ENCODE measurements at regions of chr17 and their contacts with region 1.

Region 1: DNA sequence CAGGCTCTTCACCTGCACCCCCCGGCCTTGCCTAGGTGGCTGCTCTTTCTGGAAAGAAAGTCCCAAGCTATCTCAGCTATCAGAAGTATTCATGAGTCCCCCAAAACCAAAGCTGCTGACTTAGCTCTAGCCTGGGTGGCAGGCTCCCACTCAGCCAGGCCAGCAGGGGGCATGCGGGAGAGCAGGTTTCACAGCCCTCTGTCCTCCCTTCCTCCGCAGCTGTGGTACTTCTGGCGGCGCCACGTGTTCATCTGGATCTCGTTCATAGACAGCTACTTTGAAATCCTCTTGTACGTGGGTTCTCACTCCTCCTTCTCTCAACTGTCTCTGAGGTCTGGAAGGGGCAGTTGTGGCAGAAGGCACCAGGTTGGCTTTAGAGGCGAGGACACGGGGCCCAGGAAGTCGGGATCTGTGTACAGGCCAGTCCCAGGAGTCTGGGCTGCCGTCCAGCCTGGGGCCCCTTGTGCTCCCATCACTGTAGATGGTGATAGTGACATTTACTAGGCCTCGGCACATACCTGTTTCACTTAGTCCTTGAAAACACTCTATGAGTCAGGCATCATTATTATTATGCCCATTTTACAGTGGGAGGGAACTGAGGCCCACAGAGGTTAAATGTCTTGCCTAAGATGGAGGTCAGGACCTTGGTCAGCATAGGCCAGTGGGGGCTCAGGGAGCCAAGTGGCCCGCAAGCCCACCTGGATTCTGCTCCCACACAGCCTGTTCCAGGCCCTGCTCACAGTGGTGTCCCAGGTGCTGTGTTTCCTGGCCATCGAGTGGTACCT is 12.9 kb downstream of the TRPV2 start:
- DNase-seq: peak; percentile 74
- ATAC-seq: peak; percentile 85
- H3K4me3 Mint-ChIP-seq: no peak overlapping the region
- H3K27ac Mint-ChIP-seq: no peak overlapping the region
- H3K4me1 Mint-ChIP-seq: peaks cover 4% of the 10 kb centered on the region
- H3K27me3 Mint-ChIP-seq: peaks cover 7% of the 10 kb centered on the region; the same call in 1 of the 2 replicates
- CTCF ChIP-seq: peak; percentile 27; the same call in 1 of the 2 replicates

Region 2: DNA sequence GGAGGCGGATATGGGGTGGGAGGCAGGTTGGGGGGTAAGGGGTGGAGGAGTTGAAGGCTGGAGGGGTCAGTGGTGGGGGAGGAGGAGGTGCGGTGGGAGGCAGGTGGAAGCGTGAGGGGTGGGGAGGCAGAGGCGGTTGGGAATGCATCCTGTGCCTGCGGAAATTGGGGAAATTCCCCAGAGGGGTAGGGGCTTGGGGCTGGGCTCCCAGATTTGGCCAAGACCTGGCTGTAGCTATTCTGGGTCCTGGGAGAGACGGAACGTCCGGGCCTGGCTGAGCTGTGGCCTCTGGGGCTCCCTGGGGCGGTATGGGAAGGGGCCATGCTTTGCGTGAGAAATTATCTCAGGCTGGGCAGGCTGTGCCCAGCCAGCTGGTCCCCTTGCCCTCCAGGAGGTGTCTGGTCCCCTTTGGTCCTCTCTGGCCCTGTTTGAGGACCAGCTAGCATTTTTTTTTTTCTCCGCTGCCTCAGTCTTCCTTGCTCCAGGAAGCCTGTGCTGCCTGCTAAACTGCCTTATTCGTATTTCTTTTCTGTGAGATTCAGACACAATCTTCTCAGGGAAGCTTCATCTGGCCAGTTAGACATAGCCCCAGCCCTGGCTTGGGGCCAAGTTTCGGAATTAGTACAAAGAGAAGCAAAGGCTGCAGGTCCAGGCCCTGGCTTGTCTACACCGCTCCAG is 20.2 kb before region 1 on chr17:
- CTCF ChIA-PET with region 1: interaction called, 15 read pairs
- POLR2A ChIA-PET with region 1: interaction called, 4 read pairs
- DNase-seq: peak; percentile 60
- ATAC-seq: peak; percentile 50
- H3K4me3 Mint-ChIP-seq: peak overlapping the region; percentile 51
- H3K27ac Mint-ChIP-seq: peak overlapping the region; percentile 91
- H3K4me1 Mint-ChIP-seq: peaks cover 11% of the 10 kb centered on the region
- H3K27me3 Mint-ChIP-seq: peaks cover 6% of the 10 kb centered on the region; the same call in 1 of the 2 replicates
- CTCF ChIP-seq: no peak

Region 3: GRCh38 chr17:16415031-16415924 is 13.0 kb before region 1 on chr17 and contains the start of gene TRPV2:
- CTCF ChIA-PET with region 1: interaction called, 31 read pairs
- POLR2A ChIA-PET with region 1: interaction called, 4 read pairs
- DNase-seq: peak; percentile 62
- ATAC-seq: peak; percentile 87
- H3K4me3 Mint-ChIP-seq: no peak within 1 kb of the TSS; the same call in 1 of the 2 replicates
- H3K27ac Mint-ChIP-seq: no peak within 1 kb of the TSS
- H3K4me1 Mint-ChIP-seq: peaks cover 27% of the 10 kb centered on the region
- H3K27me3 Mint-ChIP-seq: no peaks in the 10 kb centered on the region; the same call in 1 of the 2 replicates
- CTCF ChIP-seq: peak; percentile 23; the same call in 1 of the 2 replicates
- total RNA-seq, gene TRPV2: 3.5 to 4.9 TPM (median 4.3 TPM) in 3 replicates

Region 4: GRCh38 chr17:16438557-16439302 is 10.4 kb after region 1 on chr17:
- CTCF ChIA-PET with region 1: interaction called, 49 read pairs
- POLR2A ChIA-PET with region 1: interaction called, 16 read pairs
- DNase-seq: peak; percentile 95
- ATAC-seq: peak; percentile 64
- H3K4me3 Mint-ChIP-seq: peak overlapping the region; percentile 99
- H3K27ac Mint-ChIP-seq: peak overlapping the region; percentile 100
- H3K4me1 Mint-ChIP-seq: peaks cover 66% of the 10 kb centered on the region
- H3K27me3 Mint-ChIP-seq: no peaks in the 10 kb centered on the region; the same call in 1 of the 2 replicates
- CTCF ChIP-seq: no peak

Measured in WTC11 (cell line).